ENCODE measurements at regions of chr3 and their contacts with region 1.

Region 1: DNA sequence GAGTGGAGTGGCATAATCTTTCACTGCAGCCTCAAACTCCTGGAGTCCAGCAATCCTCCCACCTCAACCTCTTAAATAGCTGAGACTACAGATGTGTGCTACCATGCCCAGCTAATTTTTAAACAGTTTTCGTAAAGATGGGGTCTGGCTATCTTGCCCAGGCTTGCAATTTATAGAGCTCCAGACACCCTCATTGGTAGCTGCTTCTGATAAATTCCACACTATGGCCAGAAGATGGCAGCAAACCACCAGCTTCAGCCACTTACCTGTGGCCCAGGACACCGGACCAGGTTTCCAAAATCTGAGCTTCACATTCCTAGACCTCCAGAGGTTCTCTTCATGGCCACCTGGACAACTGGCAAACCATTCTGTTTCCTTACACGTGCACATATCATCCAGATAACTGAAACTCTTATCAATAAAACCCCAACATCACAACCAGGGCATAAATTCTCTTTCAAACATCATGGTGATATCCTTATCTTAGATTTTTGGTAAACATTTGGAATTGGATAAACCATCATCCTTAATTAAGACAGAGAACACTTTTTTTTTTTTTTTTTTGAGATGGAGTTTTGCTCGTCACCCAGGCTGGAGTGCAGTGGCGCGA is 28.9 kb downstream of the FBXW12 start:
- H3K4me3 ChIP-seq: no peak overlapping the region
- H3K27ac ChIP-seq: no peak overlapping the region
- H3K4me1 ChIP-seq: no peaks in the 10 kb centered on the region
- CTCF ChIP-seq: no peak

Region 2: GRCh38 chr3:48347500-48347899 is 53.4 kb before region 1 on chr3:
- CTCF ChIA-PET with region 1: no interaction called
- POLR2A ChIA-PET with region 1: no interaction called
- H3K4me3 ChIP-seq: no peak overlapping the region
- H3K27ac ChIP-seq: no peak overlapping the region
- H3K4me1 ChIP-seq: no peaks in the 10 kb centered on the region
- CTCF ChIP-seq: no peak

Region 3: DNA sequence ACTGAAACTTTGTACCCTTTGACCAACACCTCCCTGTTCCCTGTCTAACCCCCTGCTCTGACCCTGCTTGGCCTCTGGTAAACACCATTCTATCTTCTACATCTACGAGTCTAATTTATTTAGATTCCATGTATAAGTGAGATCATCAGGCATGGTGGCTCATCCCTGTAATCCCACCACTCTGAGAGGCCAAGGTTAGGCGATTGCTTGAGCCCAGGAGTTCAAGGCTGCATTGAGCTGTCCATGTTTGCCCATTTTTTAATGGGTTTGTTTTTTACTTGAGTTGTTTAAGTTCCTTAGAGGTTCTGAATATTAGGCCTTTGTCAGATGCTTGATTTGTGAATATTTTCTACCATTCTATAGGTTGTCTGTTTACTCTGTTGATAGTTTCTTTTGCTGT is 12.0 kb before region 1 on chr3:
- CTCF ChIA-PET with region 1: interaction called, 14 read pairs
- POLR2A ChIA-PET with region 1: no interaction called
- H3K4me3 ChIP-seq: no peak overlapping the region
- H3K27ac ChIP-seq: no peak overlapping the region
- H3K4me1 ChIP-seq: no peaks in the 10 kb centered on the region
- CTCF ChIP-seq: no peak

Region 4: GRCh38 chr3:48432411-48433372 is 31.8 kb after region 1 on chr3:
- CTCF ChIA-PET with region 1: interaction called, 238 read pairs
- POLR2A ChIA-PET with region 1: interaction called, 13 read pairs
- H3K4me3 ChIP-seq: no peak overlapping the region
- H3K27ac ChIP-seq: peak overlapping the region; percentile 31; the same call in 1 of the 2 replicates
- H3K4me1 ChIP-seq: peaks cover 3% of the 10 kb centered on the region; the same call in 1 of the 2 replicates
- CTCF ChIP-seq: peak; percentile 71; the same call in 1 of the 2 replicates

Region 5: DNA sequence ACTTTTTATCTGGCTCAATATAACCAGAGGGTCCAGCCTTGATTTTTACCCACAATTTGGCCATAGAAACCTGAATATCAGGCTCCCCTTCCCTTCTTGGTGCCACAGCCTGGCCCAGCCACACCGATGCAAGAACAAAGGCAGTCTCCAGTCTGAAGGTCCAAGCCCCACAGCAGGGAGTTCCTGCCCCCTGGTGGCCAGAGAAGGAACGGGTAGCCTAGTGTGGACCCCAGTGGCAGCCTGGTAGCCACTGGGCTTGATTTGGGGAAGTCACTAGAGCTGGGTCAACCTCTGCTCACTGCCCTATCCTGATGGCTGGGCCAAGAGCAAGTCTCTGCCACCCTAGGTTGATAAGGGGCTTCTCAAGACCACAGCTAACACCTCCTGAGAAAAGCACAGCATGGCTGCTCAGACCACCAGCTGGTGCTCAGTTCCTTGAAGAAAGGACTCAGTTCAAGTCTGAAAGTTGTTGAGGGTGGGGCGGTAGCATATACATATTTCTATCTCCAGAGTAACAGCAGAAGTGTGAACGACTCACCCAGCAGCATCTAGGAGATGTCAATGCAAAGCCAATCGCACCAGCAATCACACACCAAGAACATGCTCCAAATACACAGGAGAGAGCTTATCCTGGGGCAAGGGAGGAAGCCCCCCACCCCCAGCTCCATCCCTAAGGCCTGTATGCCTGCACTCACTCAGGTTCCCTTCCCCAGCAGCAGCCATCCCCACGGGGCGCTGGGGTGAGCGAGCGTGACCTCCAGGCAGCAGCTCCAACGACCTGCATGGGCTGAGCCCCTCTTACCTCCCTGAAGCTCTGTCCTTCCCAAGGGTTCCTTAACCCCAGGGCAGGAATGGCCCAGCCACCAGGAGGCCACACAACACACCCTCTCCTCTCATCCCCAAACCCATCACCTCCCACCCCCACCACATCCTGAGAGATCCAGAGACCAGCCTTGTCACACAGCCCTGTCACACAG is 148.1 kb after region 1 on chr3:
- CTCF ChIA-PET with region 1: interaction called, 40 read pairs
- POLR2A ChIA-PET with region 1: interaction called, 4 read pairs
- H3K4me3 ChIP-seq: no peak overlapping the region
- H3K27ac ChIP-seq: no peak overlapping the region
- H3K4me1 ChIP-seq: no peaks in the 10 kb centered on the region
- CTCF ChIP-seq: peak; percentile 71

Region 6: DNA sequence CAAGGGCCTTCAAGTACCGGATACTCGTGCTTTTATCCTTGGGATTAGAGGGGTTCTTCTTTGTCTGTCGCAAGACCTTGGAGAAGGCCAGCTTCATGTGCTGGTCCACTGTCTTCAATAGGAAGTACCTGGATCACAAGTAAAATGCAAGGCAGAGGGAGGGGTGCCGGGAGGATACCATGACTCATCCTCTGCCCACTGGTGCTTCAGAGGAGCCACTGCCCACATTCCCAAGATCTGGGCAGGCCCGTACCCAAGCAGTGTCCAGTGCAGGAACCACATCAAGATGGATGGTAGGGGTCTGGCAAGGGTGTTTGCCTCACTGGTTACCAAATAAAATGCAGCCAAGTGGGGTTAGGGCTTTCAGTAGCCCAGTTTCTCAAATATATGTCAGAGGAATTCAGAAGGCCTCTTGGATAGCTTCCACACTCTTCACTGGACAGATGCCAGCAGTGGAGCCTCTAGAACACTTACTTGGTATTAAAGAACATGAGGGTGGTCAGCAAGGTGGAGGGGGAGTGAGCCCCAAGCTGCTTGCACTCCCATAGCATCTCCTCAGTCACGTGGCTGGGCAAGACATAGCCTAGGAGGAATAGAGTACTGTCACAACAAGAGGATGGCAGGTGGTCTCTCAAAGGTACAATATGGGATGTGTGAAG is 631.8 kb after region 1 on chr3:
- CTCF ChIA-PET with region 1: no interaction called
- POLR2A ChIA-PET with region 1: no interaction called
- H3K4me3 ChIP-seq: no peak overlapping the region
- H3K27ac ChIP-seq: no peak overlapping the region
- H3K4me1 ChIP-seq: no peaks in the 10 kb centered on the region
- CTCF ChIP-seq: no peak